Pancreas (tissue), 10 donors: ENCODE measurements at regions of chr7 and their contacts with region 1.

Region 1: DNA sequence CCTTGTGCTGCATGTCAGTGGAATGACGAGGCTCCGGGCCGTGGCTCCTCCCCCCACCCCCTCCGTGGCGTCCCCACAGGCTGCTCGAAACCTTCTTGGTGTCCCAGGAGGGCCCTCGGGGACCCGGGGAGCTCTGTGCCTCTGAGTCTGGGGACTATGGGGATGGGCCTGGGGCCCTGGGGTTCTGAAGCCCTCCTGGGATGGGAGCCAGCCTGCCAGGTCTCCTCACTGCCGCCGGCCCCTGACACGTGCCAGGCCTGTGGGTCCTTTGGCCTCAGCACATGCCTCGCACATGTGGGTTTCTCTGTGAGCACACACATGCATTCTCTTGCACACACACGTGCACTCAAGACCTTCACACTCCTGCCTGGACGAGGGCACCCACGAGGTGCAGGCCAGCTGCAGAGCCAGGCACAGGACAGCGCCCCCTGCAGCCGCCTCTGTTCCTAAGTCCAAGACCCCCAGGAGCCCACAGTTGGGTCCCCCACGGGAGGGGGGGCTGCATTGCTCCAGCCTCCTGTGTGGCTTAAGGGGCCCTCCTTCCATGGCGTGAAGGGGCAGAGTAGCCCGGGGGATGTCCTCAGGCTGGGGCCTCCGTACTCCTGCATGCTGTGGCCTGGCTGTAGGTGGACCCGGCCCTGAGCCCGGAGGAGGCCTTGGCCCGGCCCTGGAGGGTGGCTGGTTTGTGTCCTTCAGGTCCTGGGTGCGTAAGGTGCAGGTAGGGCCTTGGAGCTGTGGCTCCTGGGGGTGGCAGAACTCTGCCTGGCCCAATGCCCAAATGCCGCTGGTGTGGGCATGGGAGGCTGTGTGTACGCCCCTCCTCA is 27.2 kb upstream of the AMZ1 start:
- DNase-seq: peak in 3 of 6 donors; percentile 17 to 66 (median 46)
- ATAC-seq: no peak
- H3K4me3 ChIP-seq: no peak overlapping the region
- H3K27ac ChIP-seq: no peak overlapping the region
- H3K4me1 ChIP-seq: no peaks in the 10 kb centered on the region
- H3K27me3 ChIP-seq: no peaks in the 10 kb centered on the region
- CTCF ChIP-seq: no peak

Region 2: GRCh38 chr7:2482725-2483451 is 177.9 kb before region 1 on chr7:
- intact Hi-C with region 1: loop called in 1 of 3 experiments (anchors 10 kb)
- DNase-seq: peak in 1 of 6 donors; percentile 46
- ATAC-seq: no peak
- H3K4me3 ChIP-seq: no peak overlapping the region
- H3K27ac ChIP-seq: no peak overlapping the region
- H3K4me1 ChIP-seq: peaks cover 6 to 10% (median 9%) of the 10 kb centered on the region in 3 donors
- H3K27me3 ChIP-seq: no peaks in the 10 kb centered on the region
- CTCF ChIP-seq: no peak